ENCODE measurements at regions of chr11 and their contacts with region 1.

Region 1: GRCh38 chr11:2885676-2886081 is at the start of gene CDKN1C:
- DNase-seq: peak; percentile 61 to 95
- H3K4me3 ChIP-seq: peak within 1 kb of the TSS; percentile 89 to 95
- H3K27ac ChIP-seq: peak within 1 kb of the TSS; percentile 80 to 86
- H3K4me1 ChIP-seq: peaks cover 0 to 17% of the 10 kb centered on the region in 2 donors
- H3K27me3 ChIP-seq: no peaks in the 10 kb centered on the region
- CTCF ChIP-seq: no peak
- total RNA-seq, gene CDKN1C: 18.1 TPM

Region 2: GRCh38 chr11:1763796-1764661 is 1121.7 kb before region 1 on chr11 and contains the start of gene CTSD:
- intact Hi-C with region 1: loop called (anchors 10 kb)
- DNase-seq: peak; percentile 16 to 93
- H3K4me3 ChIP-seq: peak within 1 kb of the TSS; percentile 74 to 96
- H3K27ac ChIP-seq: peak within 1 kb of the TSS; percentile 83 to 94
- H3K4me1 ChIP-seq: peaks cover 24 to 43% of the 10 kb centered on the region in 2 donors
- H3K27me3 ChIP-seq: no peaks in the 10 kb centered on the region
- CTCF ChIP-seq: no peak
- total RNA-seq, gene CTSD: 777 TPM

Region 3: GRCh38 chr11:2400069-2400760 is 485.5 kb before region 1 on chr11 and contains the start of gene TSSC4:
- intact Hi-C with region 1: loop called (anchors 10 kb)
- DNase-seq: peak; percentile 99 to 100
- H3K4me3 ChIP-seq: peak within 1 kb of the TSS; percentile 89 to 93
- H3K27ac ChIP-seq: peak within 1 kb of the TSS; percentile 100
- H3K4me1 ChIP-seq: peaks cover 12 to 26% of the 10 kb centered on the region in 2 donors
- H3K27me3 ChIP-seq: no peaks in the 10 kb centered on the region
- CTCF ChIP-seq: peak; percentile 93 to 98 (median 97)
- total RNA-seq, gene TSSC4: 183 TPM

Region 4: DNA sequence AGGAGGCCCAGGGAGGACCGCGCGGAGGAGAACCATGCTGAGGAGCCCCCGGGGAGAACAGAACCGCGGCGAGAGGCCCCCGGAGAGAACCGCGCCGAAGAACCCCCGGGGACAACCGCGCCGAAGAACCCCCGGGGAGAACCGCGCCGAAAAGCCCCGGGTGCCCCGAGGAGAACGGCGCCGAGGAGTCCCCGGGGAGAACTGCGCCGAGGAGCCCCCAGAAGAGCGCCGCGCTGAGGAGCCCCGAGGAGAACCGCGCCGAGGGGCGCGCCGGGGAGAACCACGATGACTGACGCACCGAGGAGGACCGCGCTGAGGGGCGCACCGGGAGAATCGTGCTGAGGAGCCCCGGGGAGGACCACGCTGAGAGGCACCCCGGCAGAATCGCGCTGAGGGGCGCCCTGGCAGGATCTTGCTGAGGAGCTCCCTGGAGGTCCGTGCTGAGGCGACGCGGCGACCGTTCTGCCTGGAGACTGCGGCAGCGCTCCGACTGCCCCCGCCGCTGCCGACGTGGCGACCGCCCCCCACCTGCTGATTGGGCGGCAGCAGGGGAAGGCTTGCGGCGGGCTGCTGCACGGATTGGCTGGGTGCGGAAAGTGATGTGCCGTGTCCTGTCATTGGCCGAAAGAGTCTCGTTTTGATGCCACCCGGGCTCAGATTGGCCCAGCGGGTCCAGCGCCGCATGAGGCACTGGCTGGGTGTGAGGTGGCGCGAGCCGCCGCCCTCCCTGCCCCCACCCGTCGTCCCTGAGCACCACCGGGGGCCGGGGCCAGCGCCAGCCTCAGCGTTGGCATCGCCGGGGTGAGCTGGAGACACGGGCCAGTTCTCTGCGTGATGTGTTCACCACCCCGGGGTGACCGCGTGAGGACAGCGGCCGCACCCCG is 185.9 kb before region 1 on chr11 and contains the start of gene KCNQ1OT1:
- intact Hi-C with region 1: loop called (anchors 1 kb)
- DNase-seq: peak; percentile 73 to 94
- H3K4me3 ChIP-seq: peak within 1 kb of the TSS; percentile 64 to 80
- H3K27ac ChIP-seq: peak within 1 kb of the TSS; percentile 89 to 96
- H3K4me1 ChIP-seq: peaks cover 0 to 4% of the 10 kb centered on the region in 2 donors
- H3K27me3 ChIP-seq: no peaks in the 10 kb centered on the region
- CTCF ChIP-seq: no peak
- total RNA-seq, gene KCNQ1OT1: 1.5 TPM

Region 5: GRCh38 chr11:2825889-2826678 is 59.6 kb before region 1 on chr11:
- intact Hi-C with region 1: loop called (anchors 1 kb)
- DNase-seq: peak; percentile 78 to 95
- H3K4me3 ChIP-seq: peak overlapping the region in 1 of 2 donors; percentile 40
- H3K27ac ChIP-seq: peak overlapping the region; percentile 84 to 94
- H3K4me1 ChIP-seq: peaks cover 13 to 28% of the 10 kb centered on the region in 2 donors
- H3K27me3 ChIP-seq: no peaks in the 10 kb centered on the region
- CTCF ChIP-seq: no peak

Region 6: DNA sequence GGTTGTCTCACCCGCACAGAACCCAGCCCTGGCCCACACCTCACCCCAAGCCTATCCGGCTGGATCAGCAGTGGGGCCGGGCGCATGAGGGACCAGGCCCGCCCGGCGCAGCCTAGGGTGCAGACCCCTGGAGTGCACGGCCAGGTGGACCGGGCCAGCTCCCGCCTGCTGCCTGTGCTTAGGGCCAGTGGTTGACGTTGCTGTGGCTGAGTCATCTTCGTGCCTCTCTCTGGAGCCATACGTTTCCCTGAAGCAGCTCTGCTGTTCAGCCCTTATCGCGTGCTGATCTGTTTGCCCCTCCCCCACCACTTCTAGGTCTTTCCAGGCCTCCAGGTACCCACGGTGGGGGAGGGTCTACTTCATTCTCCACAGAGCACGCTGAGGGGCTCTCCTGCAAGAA is 39.6 kb before region 1 on chr11:
- intact Hi-C with region 1: no loop called
- DNase-seq: no peak
- H3K4me3 ChIP-seq: no peak overlapping the region
- H3K27ac ChIP-seq: no peak overlapping the region
- H3K4me1 ChIP-seq: no peaks in the 10 kb centered on the region
- H3K27me3 ChIP-seq: no peaks in the 10 kb centered on the region
- CTCF ChIP-seq: no peak

Region 7: GRCh38 chr11:2992234-2992996 is 106.7 kb after region 1 on chr11 and contains the start of gene NAP1L4:
- intact Hi-C with region 1: loop called (anchors 2 kb)
- DNase-seq: peak; percentile 85 to 97
- H3K4me3 ChIP-seq: peak within 1 kb of the TSS; percentile 74 to 80
- H3K27ac ChIP-seq: peak within 1 kb of the TSS; percentile 71 to 90
- H3K4me1 ChIP-seq: peaks cover 6 to 27% of the 10 kb centered on the region in 2 donors
- H3K27me3 ChIP-seq: no peaks in the 10 kb centered on the region
- CTCF ChIP-seq: no peak
- total RNA-seq, gene NAP1L4: 54.5 TPM

Measured in ascending aorta (tissue), 2 donors.